A673 (cell line): ENCODE measurements at regions of chr17 and their contacts with region 1.

Region 1: GRCh38 chr17:7892750-7893149 is 4.2 kb downstream of the CHD3 start:
- DNase-seq: no peak
- H3K4me3 ChIP-seq: no peak overlapping the region
- H3K27ac ChIP-seq: no peak overlapping the region
- H3K4me1 ChIP-seq: peaks cover 21% of the 10 kb centered on the region
- H3K27me3 ChIP-seq: no peaks in the 10 kb centered on the region
- CTCF ChIP-seq: no peak

Region 2: DNA sequence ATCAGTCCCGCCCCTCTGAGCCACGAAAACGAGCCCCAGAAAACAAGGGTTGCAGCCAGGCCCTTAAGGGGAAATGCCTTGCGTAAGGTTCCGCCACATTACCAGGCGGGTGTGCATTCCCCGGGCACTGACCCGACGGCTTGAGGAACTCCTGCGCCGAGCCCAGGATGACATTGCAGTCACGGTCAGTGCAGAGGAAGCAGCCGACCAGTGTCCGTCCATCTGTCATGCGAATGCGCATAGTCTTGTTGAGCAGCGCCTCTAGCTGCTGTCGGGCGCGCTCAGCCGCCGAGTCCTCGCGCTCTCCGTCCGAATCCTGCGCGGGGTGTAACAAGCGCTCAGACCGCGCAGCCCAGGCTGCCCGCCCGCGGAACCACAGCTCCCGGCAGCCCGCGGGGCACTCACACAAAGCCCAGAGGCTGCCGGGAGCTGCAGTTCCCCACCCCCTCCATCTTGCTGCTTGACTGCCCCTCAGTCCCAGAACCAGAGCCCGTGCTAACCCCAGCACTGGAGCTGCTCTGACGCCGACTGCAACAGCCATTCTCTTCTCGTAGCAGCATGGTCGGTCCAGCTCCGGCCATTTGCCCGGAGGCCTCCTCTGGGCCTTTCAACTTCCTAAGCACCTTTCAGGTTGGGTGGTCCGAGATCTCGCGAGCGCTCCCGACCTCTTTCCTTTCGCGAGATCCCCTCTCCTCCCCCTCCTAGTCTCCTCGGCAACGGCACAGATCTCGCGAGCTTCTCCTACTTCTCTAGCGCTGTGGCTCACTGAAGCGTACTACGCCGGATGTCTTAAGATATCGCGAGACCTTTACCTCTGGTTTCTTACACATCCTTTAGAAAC is 35.6 kb before region 1 on chr17 and contains the start of gene NAA38:
- CTCF ChIA-PET with region 1: interaction called, 10 read pairs
- POLR2A ChIA-PET with region 1: no interaction called
- intact Hi-C with region 1: loop called (anchors 5 kb)
- DNase-seq: peak; percentile 100
- H3K4me3 ChIP-seq: peak within 1 kb of the TSS; percentile 65
- H3K27ac ChIP-seq: peak within 1 kb of the TSS; percentile 93
- H3K4me1 ChIP-seq: peaks cover 18% of the 10 kb centered on the region
- H3K27me3 ChIP-seq: no peaks in the 10 kb centered on the region
- CTCF ChIP-seq: peak; percentile 53
- total RNA-seq, gene NAA38: 64.3 and 67.7 TPM in 2 replicates

Region 3: GRCh38 chr17:7903154-7904103 is 10.7 kb after region 1 on chr17:
- CTCF ChIA-PET with region 1: no interaction called
- POLR2A ChIA-PET with region 1: no interaction called
- intact Hi-C with region 1: no loop called
- DNase-seq: no peak
- H3K4me3 ChIP-seq: no peak overlapping the region
- H3K27ac ChIP-seq: no peak overlapping the region
- H3K4me1 ChIP-seq: no peaks in the 10 kb centered on the region
- H3K27me3 ChIP-seq: no peaks in the 10 kb centered on the region
- CTCF ChIP-seq: no peak

Region 4: DNA sequence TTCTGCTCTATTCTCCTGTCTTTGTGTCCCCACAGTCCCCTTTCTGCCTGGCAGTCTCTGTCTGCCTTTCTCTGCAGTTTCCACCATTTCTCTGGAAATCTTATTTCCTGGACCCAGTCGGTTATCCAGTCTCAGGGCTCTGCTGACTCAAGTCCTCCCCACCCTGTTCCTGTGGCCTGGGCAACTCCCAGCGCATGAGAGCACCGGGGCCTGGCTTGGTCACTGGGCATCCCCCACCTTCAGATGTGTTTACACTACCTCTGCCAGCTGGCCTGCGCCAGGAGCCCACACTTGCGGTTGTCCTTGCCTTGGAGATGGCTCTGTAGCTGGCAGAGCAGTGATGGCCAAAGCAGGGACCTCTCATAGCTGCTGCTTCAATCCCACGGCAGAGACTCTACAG is 126.9 kb after region 1 on chr17:
- CTCF ChIA-PET with region 1: no interaction called
- POLR2A ChIA-PET with region 1: no interaction called
- intact Hi-C with region 1: no loop called
- DNase-seq: no peak
- H3K4me3 ChIP-seq: no peak overlapping the region
- H3K27ac ChIP-seq: no peak overlapping the region
- H3K4me1 ChIP-seq: peaks cover 11% of the 10 kb centered on the region
- H3K27me3 ChIP-seq: no peaks in the 10 kb centered on the region
- CTCF ChIP-seq: no peak

Region 5: GRCh38 chr17:8320990-8321389 is 428.2 kb after region 1 on chr17:
- CTCF ChIA-PET with region 1: no interaction called
- POLR2A ChIA-PET with region 1: no interaction called
- intact Hi-C with region 1: no loop called
- DNase-seq: no peak
- H3K4me3 ChIP-seq: no peak overlapping the region
- H3K27ac ChIP-seq: no peak overlapping the region
- H3K4me1 ChIP-seq: no peaks in the 10 kb centered on the region
- H3K27me3 ChIP-seq: peaks cover 7% of the 10 kb centered on the region
- CTCF ChIP-seq: no peak